Stomach (tissue), 19 donors: ENCODE measurements at regions of chr14 and their contacts with region 1.

Region 1: DNA sequence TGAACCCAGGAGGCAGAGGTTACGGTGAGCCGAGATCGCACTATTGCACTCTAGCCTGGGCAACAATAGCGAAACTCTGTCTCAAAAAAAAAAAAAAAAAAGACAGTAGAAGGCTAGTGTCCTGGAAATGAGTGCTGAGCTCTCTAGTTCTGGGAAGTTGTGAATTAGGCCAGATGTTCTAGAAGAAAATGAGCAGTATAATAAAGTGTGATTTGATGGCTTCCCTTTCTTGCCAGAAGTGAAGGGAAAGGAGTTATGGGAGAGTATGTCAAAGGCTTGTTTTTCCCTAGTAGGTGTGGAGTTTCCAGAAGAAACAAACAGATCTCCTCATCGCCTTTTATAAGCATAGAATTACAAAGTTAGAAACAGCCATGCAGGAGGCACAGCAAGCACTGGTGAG is 20.5 kb downstream of the RNF212B start:
- DNase-seq: no peak
- H3K4me3 ChIP-seq: no peak overlapping the region
- H3K27ac ChIP-seq: no peak overlapping the region
- H3K4me1 ChIP-seq: peaks cover 0 to 6% (median 2%) of the 10 kb centered on the region in 4 donors
- H3K27me3 ChIP-seq: peaks cover 0 to 6% (median 0%) of the 10 kb centered on the region in 3 donors
- CTCF ChIP-seq: no peak
- EP300 ChIP-seq: no peak
- POLR2A ChIP-seq: no peak

Region 2: DNA sequence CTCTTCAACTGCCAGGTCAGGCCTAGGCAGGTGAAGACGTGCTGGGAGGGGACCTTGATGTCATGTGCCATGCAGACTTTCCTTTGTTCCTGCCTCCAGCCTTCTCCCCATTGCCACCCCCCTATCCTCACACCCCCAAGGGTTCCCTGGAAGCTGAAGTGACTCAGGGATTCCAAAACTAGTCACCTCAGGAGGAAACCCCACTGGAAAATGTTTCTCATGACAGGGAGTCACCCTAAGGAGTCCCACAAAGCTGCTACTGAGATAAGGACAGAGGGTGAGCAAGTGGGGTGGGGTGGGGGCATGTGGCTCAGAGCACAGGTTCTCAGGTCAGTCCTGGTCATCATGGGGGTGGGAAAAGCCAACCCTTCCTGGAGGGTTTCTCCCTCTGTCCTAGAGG is 112.0 kb after region 1 on chr14:
- intact Hi-C with region 1: loop called (anchors 5 kb)
- DNase-seq: no peak
- H3K4me3 ChIP-seq: no peak overlapping the region
- H3K27ac ChIP-seq: no peak overlapping the region
- H3K4me1 ChIP-seq: peaks cover 4 to 23% (median 14%) of the 10 kb centered on the region in 4 donors
- H3K27me3 ChIP-seq: peaks cover 0 to 17% (median 10%) of the 10 kb centered on the region in 3 donors
- CTCF ChIP-seq: no peak
- EP300 ChIP-seq: no peak
- POLR2A ChIP-seq: no peak

Region 3: GRCh38 chr14:24310646-24311604 is 1052.7 kb after region 1 on chr14 and contains the start of gene LTB4R:
- intact Hi-C with region 1: no loop called
- DNase-seq: peak; percentile 86 to 93
- H3K4me3 ChIP-seq: peak within 1 kb of the TSS; percentile 47 to 58 (median 57)
- H3K27ac ChIP-seq: peak within 1 kb of the TSS; percentile 80 to 95 (median 88)
- H3K4me1 ChIP-seq: peaks cover 56 to 87% (median 75%) of the 10 kb centered on the region in 4 donors
- H3K27me3 ChIP-seq: peaks cover 0 to 4% (median 0%) of the 10 kb centered on the region in 3 donors
- CTCF ChIP-seq: peak in 4 of 7 experiments; percentile 16 to 61 (median 53)
- EP300 ChIP-seq: no peak
- POLR2A ChIP-seq: no peak
- total RNA-seq, gene LTB4R: 3.3 to 92.8 (median 24.6) TPM in 4 of 5 donors, not detected in the other